PC-3 (cell line): ENCODE measurements at regions of chr6 and their contacts with region 1.

Region 1: DNA sequence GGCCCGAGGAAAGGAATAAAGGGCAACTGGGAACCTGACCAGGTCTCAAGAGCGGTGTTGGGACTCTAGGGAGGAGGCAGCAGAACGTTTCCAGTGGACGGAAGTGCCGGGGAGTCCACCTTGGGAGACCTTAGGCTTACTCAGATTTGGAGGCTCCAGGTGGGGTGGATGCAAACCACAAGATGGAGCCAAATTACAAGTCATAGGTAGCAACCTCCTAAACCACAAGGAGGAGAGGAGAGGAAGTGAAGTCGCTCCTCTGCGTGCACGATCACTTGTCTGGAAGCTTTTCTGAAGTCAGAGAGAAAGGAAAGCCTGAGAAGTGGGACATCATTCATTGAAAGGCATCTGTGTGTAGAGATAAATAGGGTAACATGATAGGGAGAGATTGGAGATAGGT is 9.3 kb downstream of the HLA-DOA start:
- DNase-seq: peak; percentile 64
- ATAC-seq: peak; percentile 53; the same call in 1 of the 2 replicates
- H3K4me3 ChIP-seq: no peak overlapping the region
- H3K27ac ChIP-seq: no peak overlapping the region
- H3K4me1 ChIP-seq: no peaks in the 10 kb centered on the region
- H3K27me3 ChIP-seq: peaks cover 76% of the 10 kb centered on the region
- CTCF ChIP-seq: peak; percentile 61

Region 2: DNA sequence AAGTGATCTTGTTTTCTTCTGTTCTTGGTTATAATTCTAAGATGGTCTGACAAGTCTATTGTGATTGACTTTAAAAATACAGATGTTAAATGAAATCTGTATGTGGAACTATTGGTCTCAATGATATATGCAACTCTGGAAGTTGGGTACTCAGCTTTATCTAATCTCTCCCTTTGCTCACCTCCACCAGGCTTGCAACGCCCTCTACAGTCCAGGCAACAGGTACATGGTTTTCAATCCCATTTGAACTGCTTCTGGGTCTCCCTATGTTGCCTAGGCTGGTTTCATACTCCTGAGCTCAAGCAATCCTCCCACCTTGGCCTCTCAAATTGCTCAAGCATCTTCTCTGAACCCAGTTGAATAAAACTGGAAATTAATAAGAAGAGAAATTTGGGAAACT is 308.0 kb before region 1 on chr6:
- CTCF ChIA-PET with region 1: interaction called, 13 read pairs
- POLR2A ChIA-PET with region 1: no interaction called
- intact Hi-C with region 1: no loop called
- DNase-seq: peak; percentile 66
- ATAC-seq: peak; percentile 73
- H3K4me3 ChIP-seq: no peak overlapping the region
- H3K27ac ChIP-seq: no peak overlapping the region
- H3K4me1 ChIP-seq: no peaks in the 10 kb centered on the region
- H3K27me3 ChIP-seq: peaks cover 31% of the 10 kb centered on the region
- CTCF ChIP-seq: peak; percentile 83

Region 3: GRCh38 chr6:33425668-33426577 is 425.9 kb after region 1 on chr6:
- CTCF ChIA-PET with region 1: no interaction called
- POLR2A ChIA-PET with region 1: no interaction called
- intact Hi-C with region 1: no loop called
- DNase-seq: peak; percentile 77
- ATAC-seq: peak; percentile 63
- H3K4me3 ChIP-seq: peak overlapping the region; percentile 66
- H3K27ac ChIP-seq: peak overlapping the region; percentile 57
- H3K4me1 ChIP-seq: peaks cover 23% of the 10 kb centered on the region
- H3K27me3 ChIP-seq: no peaks in the 10 kb centered on the region
- CTCF ChIP-seq: peak; percentile 58